ENCODE measurements at regions of chr17 and their contacts with region 1.

Region 1: GRCh38 chr17:82351716-82352488 is 7.1 kb upstream of the TEX19 start:
- DNase-seq: peak; percentile 63 to 96 (median 86)

Region 2: DNA sequence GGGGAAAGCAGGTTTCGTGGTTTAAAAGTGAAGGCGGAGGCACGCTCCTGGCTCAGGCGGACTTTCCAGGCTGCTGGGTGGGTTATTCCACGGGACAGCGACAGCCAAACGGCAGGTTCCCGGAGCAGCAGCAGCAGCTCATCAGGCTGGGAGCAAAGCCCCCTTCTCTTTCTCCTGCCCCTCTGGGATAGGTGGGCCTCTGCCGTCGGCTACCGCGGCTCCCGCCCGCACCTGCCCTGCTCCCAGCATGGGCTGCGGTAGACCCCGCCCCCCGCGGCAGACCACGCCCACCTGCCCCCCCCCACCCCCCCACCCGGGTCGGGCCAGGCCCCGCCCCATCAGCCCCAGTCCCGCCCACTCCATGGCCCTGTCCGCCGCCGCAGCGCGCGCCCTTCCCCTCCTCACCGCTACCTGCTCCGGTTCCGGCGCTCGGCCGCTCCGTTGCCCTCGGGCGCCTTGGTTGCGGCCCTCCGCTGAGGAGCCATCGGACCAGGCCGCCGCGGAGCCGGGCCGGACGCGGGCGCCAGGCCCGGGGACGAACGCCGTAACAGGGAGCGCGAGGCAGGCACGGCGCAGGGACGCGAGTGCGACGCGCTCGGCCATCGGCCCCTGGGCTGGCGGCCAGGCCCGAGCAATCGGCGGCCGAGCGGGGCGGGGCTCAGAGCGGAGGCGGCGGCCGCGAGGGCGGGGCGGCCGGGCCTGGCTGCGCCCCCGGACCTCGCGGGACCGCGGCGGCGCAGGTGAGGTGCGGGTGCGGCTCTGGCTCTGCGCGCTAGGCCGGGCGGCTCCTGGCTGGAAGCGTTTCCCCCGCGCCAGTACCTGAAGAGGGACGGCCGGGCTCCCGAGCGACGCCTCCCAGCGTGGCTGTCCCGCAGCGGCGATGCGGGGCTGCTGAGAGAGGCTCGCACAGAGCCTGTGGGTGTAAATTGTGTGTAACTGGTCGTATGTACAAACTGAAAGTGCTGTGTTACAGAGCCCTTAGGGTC is 66.4 kb after region 1 on chr17 and contains the starts of genes HEXD and OGFOD3:
- intact Hi-C with region 1: loop called (anchors 1 kb)
- DNase-seq: peak; percentile 59 to 97 (median 74)